Dendritic cell treated with granulocyte-macrophage colony-stimulating factor and Interleukin-4, amounts not matched to agents 40 ng/mL and 50 ng/mL, for 4 days (primary cell): ENCODE measurements at regions of chr3 and their contacts with region 1.

Region 1: DNA sequence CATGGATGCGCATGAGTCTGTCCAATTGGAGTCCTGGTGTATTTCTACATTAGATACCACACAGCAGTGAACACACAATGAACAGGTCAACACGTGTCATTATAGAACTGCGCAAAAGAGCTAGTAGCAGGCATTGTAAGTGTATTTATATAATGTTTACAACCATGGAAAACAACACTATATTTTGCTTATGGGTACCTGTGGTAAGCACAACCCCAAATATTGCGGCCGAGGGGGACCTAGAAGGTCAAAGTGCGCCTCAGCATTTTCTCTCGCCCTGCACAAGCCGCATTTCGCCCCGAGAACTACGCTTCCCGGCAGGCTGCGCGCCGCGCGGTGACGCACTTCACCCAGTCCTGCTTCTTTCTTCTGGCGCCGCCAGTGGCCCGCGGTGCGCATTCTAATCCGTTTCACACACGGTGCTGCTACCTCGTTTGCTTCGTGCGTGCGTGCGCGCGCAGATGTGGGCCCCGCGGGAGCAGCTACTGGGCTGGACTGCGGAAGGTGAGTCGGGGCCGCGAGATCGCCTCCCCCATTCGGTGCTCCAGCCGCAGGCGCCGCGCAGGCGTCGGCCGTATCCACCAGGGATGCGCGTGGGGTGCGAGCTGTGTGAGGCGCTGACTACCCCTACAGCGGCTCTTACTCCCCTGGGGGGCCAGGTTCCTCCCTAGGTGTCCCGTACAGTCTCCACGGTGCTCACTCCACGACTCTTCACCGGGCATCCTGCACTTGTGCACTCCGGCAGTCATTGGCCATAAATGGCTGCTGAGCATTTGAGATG is at the start of gene ZNF589:
- H3K4me3 Mint-ChIP-seq: peak within 1 kb of the TSS; percentile 86
- H3K27ac Mint-ChIP-seq: peak within 1 kb of the TSS; percentile 94
- H3K4me1 Mint-ChIP-seq: peaks cover 54% of the 10 kb centered on the region
- H3K27me3 Mint-ChIP-seq: no peaks in the 10 kb centered on the region

Region 2: GRCh38 chr3:48194446-48195071 is 46.3 kb before region 1 on chr3:
- intact Hi-C with region 1: loop called (anchors 10 kb)
- H3K4me3 Mint-ChIP-seq: no peak overlapping the region
- H3K27ac Mint-ChIP-seq: no peak overlapping the region
- H3K4me1 Mint-ChIP-seq: peaks cover 19% of the 10 kb centered on the region
- H3K27me3 Mint-ChIP-seq: peaks cover 4% of the 10 kb centered on the region

Region 3: DNA sequence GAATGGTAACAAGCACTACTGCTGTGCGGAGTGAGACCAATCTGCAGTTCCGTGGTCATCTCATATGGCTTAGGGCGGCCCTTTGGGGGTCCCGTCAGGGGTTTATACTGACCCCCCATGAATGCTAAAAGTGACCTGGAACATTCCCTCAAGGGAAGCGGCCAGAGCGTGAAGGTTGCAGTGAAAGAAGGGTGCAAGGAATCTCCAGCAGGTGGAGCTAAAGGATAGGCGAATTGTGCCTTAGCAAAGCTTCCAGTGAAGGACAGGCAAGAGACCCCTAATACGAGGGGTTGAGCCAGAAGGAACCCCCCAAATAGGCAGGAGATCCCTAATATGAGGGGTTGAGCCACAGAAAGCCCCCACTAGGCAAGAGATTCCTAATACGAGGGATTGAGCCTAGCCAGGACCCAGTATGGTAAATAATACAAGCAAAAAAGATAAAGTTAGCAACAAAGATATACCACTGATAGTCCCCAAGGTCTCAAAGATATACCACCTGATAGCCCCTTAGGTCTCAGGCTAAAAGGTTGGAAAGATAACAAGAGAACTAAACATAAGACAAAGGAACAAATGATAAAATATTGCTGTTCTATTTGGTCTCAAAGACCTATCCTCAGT is 32.8 kb after region 1 on chr3:
- intact Hi-C with region 1: no loop called
- H3K4me3 Mint-ChIP-seq: no peak overlapping the region
- H3K27ac Mint-ChIP-seq: no peak overlapping the region
- H3K4me1 Mint-ChIP-seq: peaks cover 10% of the 10 kb centered on the region
- H3K27me3 Mint-ChIP-seq: no peaks in the 10 kb centered on the region